ENCODE measurements at regions of chr2 and their contacts with region 1.

Region 1: DNA sequence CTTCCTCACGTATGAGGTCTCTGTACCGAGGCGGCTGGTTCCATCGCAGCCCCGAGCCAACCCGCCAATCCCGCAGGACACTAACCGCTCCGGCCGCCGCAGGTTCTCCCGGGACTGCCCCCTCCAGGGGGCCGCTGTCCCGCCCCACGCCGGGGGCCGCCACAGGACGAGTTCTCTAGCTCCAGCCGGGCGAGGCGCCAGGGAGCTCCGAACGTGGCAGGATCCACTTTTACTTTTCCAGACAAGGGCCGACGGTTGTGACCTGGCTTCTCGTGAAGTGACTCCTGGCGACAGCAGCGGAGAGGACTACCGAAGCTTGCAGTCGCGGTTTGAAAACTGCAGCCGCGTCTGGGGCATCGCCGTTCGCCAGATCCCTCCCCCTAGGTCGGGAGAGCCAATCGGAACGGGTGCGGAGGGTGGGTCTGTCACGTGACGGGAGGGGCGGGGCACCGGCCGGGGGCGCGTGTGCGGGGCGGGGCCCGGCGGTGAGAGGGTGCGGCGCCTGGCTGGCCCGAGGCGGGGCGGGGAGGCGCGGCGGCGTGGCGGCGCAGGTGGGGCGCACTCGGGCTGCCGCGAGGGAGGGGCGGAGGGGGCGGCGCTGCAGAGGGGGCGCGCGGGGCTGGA is at the start of gene STK17B:
- DNase-seq: peak; percentile 96 to 99 (median 98)
- ATAC-seq: peak; percentile 57
- H3K4me3 ChIP-seq: peak within 1 kb of the TSS; percentile 91
- H3K4me3 Mint-ChIP-seq: peak within 1 kb of the TSS; percentile 99
- H3K27ac ChIP-seq: peak within 1 kb of the TSS; percentile 76 to 99
- H3K27ac Mint-ChIP-seq: peak within 1 kb of the TSS; percentile 85
- H3K4me1 ChIP-seq: peaks cover 40% of the 10 kb centered on the region
- H3K4me1 Mint-ChIP-seq: peaks cover 44% of the 10 kb centered on the region
- H3K27me3 ChIP-seq: no peaks in the 10 kb centered on the region
- H3K27me3 Mint-ChIP-seq: peaks cover 8% of the 10 kb centered on the region
- CTCF ChIP-seq: no peak
- total RNA-seq, gene STK17B: 645 to 648 TPM

Region 2: GRCh38 chr2:195656859-195657633 is 514.3 kb before region 1 on chr2 and contains the start of gene SLC39A10:
- CTCF ChIA-PET with region 1: no interaction called
- POLR2A ChIA-PET with region 1: interaction called, 12 read pairs
- intact Hi-C with region 1: no loop called
- DNase-seq: peak; percentile 93 to 100 (median 98)
- ATAC-seq: peak; percentile 78
- H3K4me3 ChIP-seq: peak within 1 kb of the TSS; percentile 94
- H3K4me3 Mint-ChIP-seq: peak within 1 kb of the TSS; percentile 99
- H3K27ac ChIP-seq: peak within 1 kb of the TSS; percentile 97 to 99
- H3K27ac Mint-ChIP-seq: peak within 1 kb of the TSS; percentile 98
- H3K4me1 ChIP-seq: peaks cover 10% of the 10 kb centered on the region
- H3K4me1 Mint-ChIP-seq: peaks cover 35% of the 10 kb centered on the region
- H3K27me3 ChIP-seq: no peaks in the 10 kb centered on the region
- H3K27me3 Mint-ChIP-seq: peaks cover 4% of the 10 kb centered on the region
- CTCF ChIP-seq: no peak
- total RNA-seq, gene SLC39A10: 38.2 to 39.4 TPM

Region 3: DNA sequence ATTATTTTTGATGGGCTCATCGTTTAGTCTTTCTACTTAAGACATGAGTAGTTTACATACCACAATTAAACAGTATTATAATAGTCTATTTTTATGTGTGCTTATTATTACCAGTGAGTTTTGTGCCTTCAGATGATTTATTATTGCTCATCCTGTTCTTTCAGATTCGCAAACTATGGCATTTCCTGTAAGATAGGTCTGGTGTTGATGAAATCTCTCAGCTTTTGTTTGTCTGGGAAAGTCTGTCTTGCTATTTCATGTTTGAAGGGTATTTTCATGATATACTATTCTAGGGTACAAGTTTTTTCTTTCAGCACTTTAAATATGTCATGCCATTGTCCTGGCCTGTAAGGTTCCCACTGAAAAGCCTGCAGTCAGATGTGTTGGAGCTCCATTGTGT is 204.0 kb before region 1 on chr2:
- CTCF ChIA-PET with region 1: no interaction called
- POLR2A ChIA-PET with region 1: no interaction called
- intact Hi-C with region 1: no loop called
- DNase-seq: no peak
- ATAC-seq: no peak
- H3K4me3 ChIP-seq: no peak overlapping the region
- H3K4me3 Mint-ChIP-seq: no peak overlapping the region
- H3K27ac ChIP-seq: no peak overlapping the region
- H3K27ac Mint-ChIP-seq: no peak overlapping the region
- H3K4me1 ChIP-seq: no peaks in the 10 kb centered on the region
- H3K4me1 Mint-ChIP-seq: no peaks in the 10 kb centered on the region
- H3K27me3 ChIP-seq: no peaks in the 10 kb centered on the region
- H3K27me3 Mint-ChIP-seq: peaks cover 14% of the 10 kb centered on the region
- CTCF ChIP-seq: no peak

Region 4: DNA sequence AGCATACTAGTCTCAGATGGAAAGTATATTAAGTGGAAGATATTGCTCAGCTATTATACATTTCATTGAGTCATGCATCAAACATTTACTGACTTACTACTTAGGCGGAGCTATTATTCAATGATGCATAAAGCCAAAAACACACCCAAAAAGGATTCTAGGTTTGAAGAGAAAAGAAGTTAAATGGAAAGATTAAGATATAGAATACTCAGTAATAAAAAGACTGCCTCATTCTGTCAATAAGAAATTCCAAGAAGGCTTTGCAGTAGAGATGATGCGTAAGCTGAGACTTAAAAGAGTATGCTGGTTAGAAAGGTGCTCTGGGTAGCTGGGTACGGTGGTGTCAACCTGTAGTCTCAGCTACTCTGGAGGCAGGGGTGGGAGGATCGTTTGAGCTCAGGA is 27.6 kb before region 1 on chr2:
- CTCF ChIA-PET with region 1: interaction called, 3 read pairs
- POLR2A ChIA-PET with region 1: interaction called, 82 read pairs
- intact Hi-C with region 1: loop called in 1 of 2 experiments (anchors 2 kb)
- DNase-seq: no peak
- ATAC-seq: no peak
- H3K4me3 ChIP-seq: no peak overlapping the region
- H3K4me3 Mint-ChIP-seq: peak overlapping the region; percentile 56
- H3K27ac ChIP-seq: peak overlapping the region; percentile 9 to 23
- H3K27ac Mint-ChIP-seq: peak overlapping the region; percentile 77
- H3K4me1 ChIP-seq: peaks cover 44% of the 10 kb centered on the region
- H3K4me1 Mint-ChIP-seq: peaks cover 83% of the 10 kb centered on the region
- H3K27me3 ChIP-seq: no peaks in the 10 kb centered on the region
- H3K27me3 Mint-ChIP-seq: no peaks in the 10 kb centered on the region
- CTCF ChIP-seq: no peak

Region 5: DNA sequence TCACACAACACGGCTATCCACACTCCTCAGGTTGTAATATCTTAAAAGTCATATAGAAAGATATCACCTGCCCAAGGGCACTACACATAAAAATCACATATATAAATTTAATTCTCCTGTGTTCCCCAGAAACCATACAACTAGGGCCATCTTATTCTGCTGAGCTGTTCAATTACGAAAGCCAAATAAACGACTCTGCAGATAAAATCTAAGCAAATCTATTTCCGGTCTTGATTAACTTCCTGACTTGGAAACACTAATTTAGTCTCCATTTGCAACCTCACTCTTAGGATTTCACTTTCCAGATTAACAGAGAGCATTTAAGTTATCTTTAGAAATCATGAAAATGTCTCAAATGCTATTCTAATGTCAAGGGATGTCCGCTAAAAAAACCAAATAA is 23.9 kb after region 1 on chr2:
- CTCF ChIA-PET with region 1: interaction called, 3 read pairs
- POLR2A ChIA-PET with region 1: interaction called, 37 read pairs
- intact Hi-C with region 1: no loop called
- DNase-seq: peak in 3 of 14 experiments; percentile 36 to 72 (median 37)
- ATAC-seq: no peak
- H3K4me3 ChIP-seq: no peak overlapping the region
- H3K4me3 Mint-ChIP-seq: peak overlapping the region; percentile 38
- H3K27ac ChIP-seq: no peak overlapping the region
- H3K27ac Mint-ChIP-seq: peak overlapping the region; percentile 41
- H3K4me1 ChIP-seq: peaks cover 12% of the 10 kb centered on the region
- H3K4me1 Mint-ChIP-seq: peaks cover 81% of the 10 kb centered on the region
- H3K27me3 ChIP-seq: no peaks in the 10 kb centered on the region
- H3K27me3 Mint-ChIP-seq: no peaks in the 10 kb centered on the region
- CTCF ChIP-seq: no peak

Region 6: DNA sequence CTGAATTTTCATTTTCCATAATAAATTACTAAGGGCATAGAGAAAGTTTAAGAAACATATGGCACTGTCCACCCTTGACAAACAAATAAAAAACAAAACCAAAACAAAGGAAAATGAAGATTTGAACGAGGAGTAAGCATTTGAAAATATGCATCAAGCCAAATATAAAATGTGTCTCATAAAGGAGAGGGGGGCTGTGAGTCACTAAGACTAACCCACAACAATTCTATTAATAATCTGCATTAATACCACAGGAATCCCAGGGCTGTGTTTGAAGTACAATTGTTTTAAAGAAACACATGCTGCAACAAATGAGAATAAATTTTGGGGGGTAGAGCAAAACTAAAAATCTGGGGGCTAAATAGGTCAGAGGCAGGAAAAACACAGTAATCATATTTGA is 53.9 kb after region 1 on chr2:
- CTCF ChIA-PET with region 1: interaction called, 11 read pairs
- POLR2A ChIA-PET with region 1: interaction called, 58 read pairs
- intact Hi-C with region 1: loop called in 1 of 2 experiments (anchors 2 kb)
- DNase-seq: no peak
- ATAC-seq: no peak
- H3K4me3 ChIP-seq: no peak overlapping the region
- H3K4me3 Mint-ChIP-seq: peak overlapping the region; percentile 7
- H3K27ac ChIP-seq: no peak overlapping the region
- H3K27ac Mint-ChIP-seq: peak overlapping the region; percentile 46
- H3K4me1 ChIP-seq: peaks cover 30% of the 10 kb centered on the region
- H3K4me1 Mint-ChIP-seq: peaks cover 89% of the 10 kb centered on the region
- H3K27me3 ChIP-seq: no peaks in the 10 kb centered on the region
- H3K27me3 Mint-ChIP-seq: no peaks in the 10 kb centered on the region
- CTCF ChIP-seq: no peak

Region 7: GRCh38 chr2:196268538-196269338 is 97.4 kb after region 1 on chr2:
- CTCF ChIA-PET with region 1: interaction called, 6 read pairs
- POLR2A ChIA-PET with region 1: interaction called, 60 read pairs
- intact Hi-C with region 1: loop called in 1 of 2 experiments (anchors 2 kb)
- DNase-seq: peak in 3 of 14 experiments; percentile 44 to 62 (median 50)
- ATAC-seq: peak; percentile 53
- H3K4me3 ChIP-seq: peak overlapping the region; percentile 28
- H3K4me3 Mint-ChIP-seq: peak overlapping the region; percentile 59
- H3K27ac ChIP-seq: peak overlapping the region; percentile 39 to 53
- H3K27ac Mint-ChIP-seq: peak overlapping the region; percentile 83
- H3K4me1 ChIP-seq: peaks cover 17% of the 10 kb centered on the region
- H3K4me1 Mint-ChIP-seq: peaks cover 65% of the 10 kb centered on the region
- H3K27me3 ChIP-seq: no peaks in the 10 kb centered on the region
- H3K27me3 Mint-ChIP-seq: no peaks in the 10 kb centered on the region
- CTCF ChIP-seq: no peak